Heart left ventricle (tissue), 16 donors: ENCODE measurements at regions of chr2 and their contacts with region 1.

Region 1: DNA sequence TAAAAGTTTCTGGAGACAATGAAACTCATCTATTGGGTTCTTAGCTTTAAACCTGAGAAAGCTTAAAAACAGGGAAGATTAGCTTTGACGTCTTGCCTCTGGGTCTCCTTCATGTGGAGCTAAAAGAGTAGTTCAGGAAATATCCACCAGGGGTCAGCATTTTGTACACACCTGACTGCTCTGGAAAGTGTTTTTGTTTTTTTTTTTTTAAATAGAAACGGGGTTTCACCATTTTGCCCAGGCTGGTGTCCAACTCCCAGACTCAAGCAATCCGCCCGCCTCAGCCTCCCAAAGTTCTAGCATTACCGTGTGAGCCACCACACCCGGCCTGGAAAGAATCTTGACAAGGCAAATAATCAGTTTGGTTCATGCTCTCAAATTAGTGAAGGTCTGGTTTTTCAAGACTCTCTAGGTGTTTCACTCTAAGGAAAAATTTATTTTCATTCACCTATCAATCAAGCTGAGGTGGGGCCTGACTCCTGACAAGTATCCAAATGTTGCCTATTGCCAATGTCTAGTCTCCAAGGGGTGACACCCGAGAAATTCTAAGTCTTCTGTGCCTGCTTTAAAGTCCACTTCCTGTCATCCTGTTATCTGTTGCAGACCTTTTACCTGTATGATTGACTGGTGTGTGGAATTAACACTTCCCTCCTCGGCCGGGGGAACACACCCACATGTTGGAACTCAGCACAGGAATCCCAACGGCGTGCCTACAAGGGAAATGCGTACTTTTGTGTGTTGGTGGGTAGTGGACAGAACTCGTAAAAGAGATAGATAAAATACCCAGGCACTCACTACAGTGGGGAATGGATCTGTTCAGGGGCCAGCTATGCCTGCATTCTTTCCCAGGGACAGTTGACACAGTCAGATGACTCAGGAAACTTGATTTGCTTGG is 11.3 kb downstream of the IL1RN start:
- DNase-seq: peak in 1 of 5 donors; percentile 25
- ATAC-seq: peak in 2 of 4 donors; percentile 34 to 54
- H3K4me3 ChIP-seq: no peak overlapping the region
- H3K27ac ChIP-seq: no peak overlapping the region
- H3K4me1 ChIP-seq: peaks cover 0 to 7% (median 0%) of the 10 kb centered on the region in 12 donors
- H3K27me3 ChIP-seq: no peaks in the 10 kb centered on the region
- CTCF ChIP-seq: peak; percentile 59 to 85 (median 78)
- POLR2A ChIP-seq: no peak

Region 2: DNA sequence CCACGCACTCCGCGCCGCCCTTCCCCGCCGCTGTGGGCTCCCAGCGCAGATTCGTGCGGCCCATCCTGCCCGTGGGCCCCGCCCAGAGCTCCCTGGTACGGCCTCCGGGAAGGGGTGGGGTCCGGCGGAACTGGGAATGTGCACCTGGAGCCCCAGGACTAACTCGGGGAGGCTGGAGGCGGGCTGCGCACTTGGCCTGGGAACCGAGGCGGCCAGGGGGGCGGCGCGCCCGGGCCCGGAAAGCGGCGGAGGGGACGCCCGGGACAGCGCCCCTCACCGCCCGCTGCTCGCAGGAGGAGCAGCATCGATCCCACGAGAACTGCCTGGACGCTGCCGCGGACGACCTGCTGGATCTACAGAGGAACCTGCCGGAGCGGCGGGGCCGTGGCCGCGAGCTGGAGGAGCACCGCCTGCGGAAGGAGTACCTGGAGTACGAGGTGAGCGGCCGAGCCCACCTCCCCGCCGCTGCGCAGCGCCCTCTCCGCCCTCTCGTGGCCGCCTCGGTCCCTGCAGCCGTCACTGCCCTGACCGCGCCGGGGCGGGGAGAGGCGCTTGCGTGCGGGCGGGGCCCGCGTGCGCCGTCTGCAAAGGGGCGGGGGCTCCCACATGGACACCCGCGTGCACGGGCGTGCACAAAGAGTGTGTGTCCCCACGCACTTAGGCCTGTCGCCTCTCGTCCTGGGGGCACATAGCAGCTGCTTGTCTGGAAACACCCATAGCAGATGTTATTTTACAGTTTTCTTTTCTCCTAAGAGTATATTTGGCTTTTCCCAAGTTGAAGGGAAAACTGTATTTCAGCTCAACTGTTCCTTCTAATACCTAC is 60.3 kb after region 1 on chr2:
- intact Hi-C with region 1: loop called in 9 of 10 experiments (anchors 2 to 5 kb)
- DNase-seq: peak; percentile 78 to 89 (median 82)
- ATAC-seq: peak; percentile 53 to 93 (median 88)
- H3K4me3 ChIP-seq: peak overlapping the region; percentile 60 to 97 (median 76)
- H3K27ac ChIP-seq: peak overlapping the region in 8 of 12 donors; percentile 9 to 58 (median 34)
- H3K4me1 ChIP-seq: peaks cover 0 to 13% (median 5%) of the 10 kb centered on the region in 12 donors
- H3K27me3 ChIP-seq: no peaks in the 10 kb centered on the region
- CTCF ChIP-seq: peak; percentile 88 to 100 (median 94)
- POLR2A ChIP-seq: no peak

Region 3: GRCh38 chr2:113203901-113204519 is 65.3 kb after region 1 on chr2:
- intact Hi-C with region 1: loop called in 9 of 10 experiments (anchors 2 to 5 kb)
- DNase-seq: peak in 4 of 5 donors; percentile 55 to 68 (median 64)
- ATAC-seq: peak; percentile 67 to 81 (median 76)
- H3K4me3 ChIP-seq: no peak overlapping the region
- H3K27ac ChIP-seq: no peak overlapping the region
- H3K4me1 ChIP-seq: peaks cover 0 to 8% (median 2%) of the 10 kb centered on the region in 12 donors
- H3K27me3 ChIP-seq: no peaks in the 10 kb centered on the region
- CTCF ChIP-seq: peak; percentile 82 to 94 (median 86)
- POLR2A ChIP-seq: no peak

Region 4: GRCh38 chr2:113248997-113249770 is 110.5 kb after region 1 on chr2:
- intact Hi-C with region 1: loop called in 3 of 10 experiments (anchors 5 to 10 kb)
- DNase-seq: peak; percentile 68 to 86 (median 77)
- ATAC-seq: peak; percentile 46 to 84 (median 74)
- H3K4me3 ChIP-seq: no peak overlapping the region
- H3K27ac ChIP-seq: no peak overlapping the region
- H3K4me1 ChIP-seq: peaks cover 0 to 28% (median 0%) of the 10 kb centered on the region in 12 donors
- H3K27me3 ChIP-seq: no peaks in the 10 kb centered on the region
- CTCF ChIP-seq: peak; percentile 85 to 95 (median 91)
- POLR2A ChIP-seq: no peak

Region 5: DNA sequence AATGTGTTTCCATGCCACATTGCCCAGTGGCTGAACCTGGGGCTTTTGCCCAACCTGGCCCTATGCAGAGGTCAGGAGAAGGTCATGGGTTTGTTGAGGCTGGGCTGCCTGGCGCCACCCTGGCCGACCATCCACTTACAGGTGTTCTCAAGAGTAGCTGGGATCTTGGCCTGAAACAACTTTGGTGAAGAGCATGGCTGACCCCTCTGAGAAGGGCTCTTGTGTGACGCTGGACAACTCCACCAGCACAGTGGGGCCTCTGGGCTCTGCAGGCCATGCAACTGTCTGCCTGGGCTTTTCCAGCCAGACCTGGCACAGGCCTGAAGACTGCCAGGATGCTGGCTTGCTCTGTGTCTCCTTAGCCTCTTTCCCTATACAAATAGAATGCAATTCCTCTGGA is 222.4 kb after region 1 on chr2:
- intact Hi-C with region 1: loop called in 2 of 10 experiments (anchors 5 to 10 kb)
- DNase-seq: no peak
- ATAC-seq: peak in 1 of 4 donors; percentile 15
- H3K4me3 ChIP-seq: no peak overlapping the region
- H3K27ac ChIP-seq: no peak overlapping the region
- H3K4me1 ChIP-seq: no peaks in the 10 kb centered on the region
- H3K27me3 ChIP-seq: no peaks in the 10 kb centered on the region
- CTCF ChIP-seq: no peak
- POLR2A ChIP-seq: no peak

Region 6: DNA sequence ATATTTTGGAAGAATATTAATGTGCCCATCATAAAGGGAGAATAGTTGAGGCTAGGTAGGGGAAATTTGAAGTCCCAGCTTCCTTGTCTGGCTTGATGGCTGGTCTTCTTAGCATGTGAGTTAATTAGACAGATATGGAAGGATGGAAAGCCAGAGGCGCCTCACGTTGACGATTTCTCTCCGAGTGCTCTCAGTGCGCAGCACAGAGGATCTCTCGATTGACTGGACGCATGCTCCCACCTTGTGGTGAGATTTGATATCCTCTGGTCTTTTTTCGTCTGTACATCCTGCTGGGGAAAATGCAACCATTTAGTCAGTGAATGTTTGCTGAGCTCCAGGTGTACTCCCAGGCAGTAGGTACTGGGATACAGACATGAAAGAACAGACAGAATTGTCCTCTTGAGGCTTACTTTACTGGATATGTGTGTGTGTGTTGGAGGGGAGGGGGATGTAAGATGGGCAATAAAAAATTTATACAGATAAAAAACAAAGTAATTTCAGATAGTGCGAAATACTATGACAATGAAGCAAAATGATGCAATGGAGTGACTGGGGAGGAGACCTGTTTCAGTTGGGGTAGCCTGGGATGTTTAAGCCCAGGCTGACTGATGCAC is 231.9 kb after region 1 on chr2:
- intact Hi-C with region 1: loop called (anchors 2 to 10 kb)
- DNase-seq: peak in 4 of 5 donors; percentile 55 to 64 (median 58)
- ATAC-seq: peak; percentile 77 to 95 (median 92)
- H3K4me3 ChIP-seq: no peak overlapping the region
- H3K27ac ChIP-seq: no peak overlapping the region
- H3K4me1 ChIP-seq: no peaks in the 10 kb centered on the region
- H3K27me3 ChIP-seq: no peaks in the 10 kb centered on the region
- CTCF ChIP-seq: peak; percentile 47 to 82 (median 71)
- POLR2A ChIP-seq: no peak

Region 7: GRCh38 chr2:113390124-113390849 is 251.6 kb after region 1 on chr2:
- intact Hi-C with region 1: loop called in 2 of 10 experiments (anchors 5 kb)
- DNase-seq: peak in 3 of 5 donors; percentile 33 to 52 (median 38)
- ATAC-seq: peak; percentile 51 to 85 (median 76)
- H3K4me3 ChIP-seq: peak overlapping the region in 6 of 12 donors; percentile 7 to 46 (median 28)
- H3K27ac ChIP-seq: peak overlapping the region in 2 of 12 donors; percentile 19 to 61
- H3K4me1 ChIP-seq: peaks cover 0 to 9% (median 0%) of the 10 kb centered on the region in 12 donors
- H3K27me3 ChIP-seq: peaks cover 0 to 5% (median 0%) of the 10 kb centered on the region in 9 donors
- CTCF ChIP-seq: peak; percentile 68 to 99 (median 94)
- POLR2A ChIP-seq: no peak